ENCODE measurements at regions of chr4 and their contacts with region 1.

Region 1: GRCh38 chr4:122827879-122828601 is 1.4 kb downstream of the FGF2 start:
- DNase-seq: peak; percentile 70
- ATAC-seq: peak; percentile 63
- H3K4me3 ChIP-seq: peak overlapping the region; percentile 86
- H3K27ac ChIP-seq: peak overlapping the region; percentile 54
- H3K4me1 ChIP-seq: peaks cover 23% of the 10 kb centered on the region
- H3K27me3 ChIP-seq: no peaks in the 10 kb centered on the region
- CTCF ChIP-seq: no peak; the same call in 1 of the 2 replicates

Region 2: DNA sequence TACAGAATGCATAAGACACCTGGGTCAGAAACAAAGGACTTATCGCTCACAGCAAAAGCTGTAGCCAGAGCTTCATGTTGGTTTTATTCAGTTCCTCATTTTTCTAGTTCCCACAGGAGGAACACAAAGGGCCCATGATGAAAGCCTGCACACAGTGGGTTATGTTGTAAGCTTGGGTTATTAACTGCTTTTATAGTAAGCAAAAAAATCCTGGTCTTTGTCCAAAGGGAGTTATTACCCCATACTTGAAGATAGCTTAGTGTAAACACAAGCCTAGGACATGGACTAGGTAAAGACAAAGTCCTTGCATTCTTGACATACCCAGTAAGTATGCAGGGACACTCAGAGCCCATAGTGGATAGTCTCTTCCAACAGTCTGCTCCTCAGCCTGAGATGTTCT is 83.8 kb before region 1 on chr4:
- CTCF ChIA-PET with region 1: no interaction called
- POLR2A ChIA-PET with region 1: no interaction called
- intact Hi-C with region 1: no loop called
- DNase-seq: no peak
- ATAC-seq: no peak
- H3K4me3 ChIP-seq: no peak overlapping the region
- H3K27ac ChIP-seq: no peak overlapping the region
- H3K4me1 ChIP-seq: peaks cover 3% of the 10 kb centered on the region; the same call in 1 of the 2 replicates
- H3K27me3 ChIP-seq: no peaks in the 10 kb centered on the region
- CTCF ChIP-seq: no peak

Region 3: GRCh38 chr4:122758033-122758432 is 70.0 kb before region 1 on chr4:
- CTCF ChIA-PET with region 1: interaction called, 3 read pairs
- POLR2A ChIA-PET with region 1: no interaction called
- intact Hi-C with region 1: loop called (anchors 5 kb)
- DNase-seq: peak; percentile 61
- ATAC-seq: peak; percentile 90
- H3K4me3 ChIP-seq: no peak overlapping the region
- H3K27ac ChIP-seq: no peak overlapping the region
- H3K4me1 ChIP-seq: peaks cover 4% of the 10 kb centered on the region
- H3K27me3 ChIP-seq: no peaks in the 10 kb centered on the region
- CTCF ChIP-seq: peak; percentile 79

Region 4: DNA sequence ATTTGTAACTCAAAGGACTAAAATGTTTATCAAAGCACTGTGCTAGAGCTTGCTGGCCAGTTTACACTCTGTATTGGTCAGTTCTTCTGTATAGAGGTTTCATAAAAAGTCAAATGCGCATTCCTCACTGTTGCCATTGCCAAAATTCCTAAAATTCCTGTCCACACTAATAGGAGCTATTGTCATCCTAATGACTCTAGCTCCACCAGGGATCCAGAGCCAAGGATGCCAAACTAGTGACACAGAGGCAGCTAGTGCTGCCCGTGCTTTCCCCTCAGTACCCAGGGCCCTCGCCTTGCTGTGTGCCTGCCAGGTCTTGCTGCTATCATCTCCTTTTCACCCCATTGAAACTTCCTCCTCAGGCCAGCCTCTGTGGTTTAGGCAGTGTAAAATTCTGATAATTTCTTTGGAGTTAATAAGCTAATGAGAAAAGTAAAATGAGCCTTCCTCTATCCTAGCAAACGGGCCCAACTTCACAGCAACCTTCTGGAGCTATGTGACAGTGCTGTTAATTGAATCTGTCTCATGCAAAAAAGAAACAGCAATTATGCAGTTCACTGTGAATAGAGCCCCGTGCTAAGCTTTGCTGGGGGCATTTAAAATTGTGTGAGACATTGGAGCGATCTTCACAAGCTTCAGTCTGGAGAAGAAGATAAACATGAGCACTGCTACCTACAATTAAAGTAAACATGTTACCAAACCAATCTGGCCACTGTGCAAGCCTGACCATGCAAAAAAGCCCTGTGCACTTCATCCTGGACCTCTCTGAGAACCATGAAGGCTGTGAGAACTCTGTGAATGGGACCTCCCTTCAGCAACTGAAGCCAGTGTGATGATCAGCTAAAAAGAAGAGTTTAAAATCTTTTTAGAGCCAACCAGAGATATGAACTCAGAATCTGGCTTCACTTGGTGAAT is 44.5 kb before region 1 on chr4:
- CTCF ChIA-PET with region 1: no interaction called
- POLR2A ChIA-PET with region 1: no interaction called
- intact Hi-C with region 1: loop called (anchors 10 kb)
- DNase-seq: peak; percentile 95
- ATAC-seq: peak; percentile 98
- H3K4me3 ChIP-seq: peak overlapping the region; percentile 37; the same call in 1 of the 2 replicates
- H3K27ac ChIP-seq: peak overlapping the region; percentile 65
- H3K4me1 ChIP-seq: peaks cover 30% of the 10 kb centered on the region
- H3K27me3 ChIP-seq: no peaks in the 10 kb centered on the region
- CTCF ChIP-seq: no peak

Region 5: GRCh38 chr4:122873821-122874593 is 46.0 kb after region 1 on chr4:
- CTCF ChIA-PET with region 1: interaction called, 3 read pairs
- POLR2A ChIA-PET with region 1: no interaction called
- intact Hi-C with region 1: loop called (anchors 5 kb)
- DNase-seq: peak; percentile 67
- ATAC-seq: peak; percentile 85
- H3K4me3 ChIP-seq: peak overlapping the region; percentile 29; the same call in 1 of the 2 replicates
- H3K27ac ChIP-seq: peak overlapping the region; percentile 80
- H3K4me1 ChIP-seq: peaks cover 19% of the 10 kb centered on the region
- H3K27me3 ChIP-seq: no peaks in the 10 kb centered on the region
- CTCF ChIP-seq: no peak

Region 6: DNA sequence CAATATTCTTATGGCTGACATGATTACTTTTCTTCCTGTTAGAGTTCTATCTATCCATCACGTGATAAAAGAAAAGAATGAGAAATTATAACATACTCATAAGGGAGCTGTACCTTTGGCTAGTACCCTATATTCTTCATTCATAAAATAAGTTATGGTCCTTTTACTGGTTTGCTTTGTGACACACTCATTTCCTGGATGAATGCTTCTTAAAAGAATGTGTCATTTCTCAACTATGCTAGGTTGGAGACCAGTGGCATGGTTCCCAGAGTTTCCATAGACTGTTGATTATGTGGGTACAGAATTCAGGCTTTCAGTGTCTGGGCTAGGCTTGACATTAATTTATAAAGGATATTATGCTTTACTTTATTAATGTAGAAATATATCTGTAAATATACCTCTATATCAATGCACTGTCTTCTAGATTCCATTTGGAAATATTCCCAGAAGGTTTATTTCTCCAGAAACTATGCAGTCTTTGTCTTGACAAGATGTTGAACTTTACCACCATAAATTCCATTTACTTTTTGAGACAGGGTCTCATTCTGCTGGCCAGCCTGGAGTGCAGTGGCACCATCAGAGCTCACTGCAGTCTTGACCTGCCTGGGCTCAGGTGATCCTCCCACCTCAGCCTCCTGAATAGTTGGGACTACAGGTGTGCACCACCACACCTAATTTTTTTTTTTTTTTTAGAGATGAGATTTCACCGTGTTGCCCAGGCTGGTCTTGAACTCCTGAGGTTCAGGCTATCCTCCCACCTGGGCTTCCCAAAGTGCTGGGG is 70.5 kb after region 1 on chr4:
- CTCF ChIA-PET with region 1: no interaction called
- POLR2A ChIA-PET with region 1: no interaction called
- intact Hi-C with region 1: loop called (anchors 5 kb)
- DNase-seq: peak; percentile 94
- ATAC-seq: peak; percentile 90
- H3K4me3 ChIP-seq: no peak overlapping the region
- H3K27ac ChIP-seq: peak overlapping the region; percentile 88
- H3K4me1 ChIP-seq: peaks cover 41% of the 10 kb centered on the region
- H3K27me3 ChIP-seq: no peaks in the 10 kb centered on the region
- CTCF ChIP-seq: no peak

Region 7: GRCh38 chr4:122914292-122914904 is 86.4 kb after region 1 on chr4:
- CTCF ChIA-PET with region 1: interaction called, 3 read pairs
- POLR2A ChIA-PET with region 1: interaction called, 5 read pairs
- intact Hi-C with region 1: loop called (anchors 2 kb)
- DNase-seq: peak; percentile 58
- ATAC-seq: peak; percentile 78
- H3K4me3 ChIP-seq: no peak overlapping the region
- H3K27ac ChIP-seq: no peak overlapping the region
- H3K4me1 ChIP-seq: peaks cover 23% of the 10 kb centered on the region
- H3K27me3 ChIP-seq: no peaks in the 10 kb centered on the region
- CTCF ChIP-seq: peak; percentile 68

Measured in PC-3 (cell line).